ENCODE measurements at regions of chr1 and their contacts with region 1.

Region 1: DNA sequence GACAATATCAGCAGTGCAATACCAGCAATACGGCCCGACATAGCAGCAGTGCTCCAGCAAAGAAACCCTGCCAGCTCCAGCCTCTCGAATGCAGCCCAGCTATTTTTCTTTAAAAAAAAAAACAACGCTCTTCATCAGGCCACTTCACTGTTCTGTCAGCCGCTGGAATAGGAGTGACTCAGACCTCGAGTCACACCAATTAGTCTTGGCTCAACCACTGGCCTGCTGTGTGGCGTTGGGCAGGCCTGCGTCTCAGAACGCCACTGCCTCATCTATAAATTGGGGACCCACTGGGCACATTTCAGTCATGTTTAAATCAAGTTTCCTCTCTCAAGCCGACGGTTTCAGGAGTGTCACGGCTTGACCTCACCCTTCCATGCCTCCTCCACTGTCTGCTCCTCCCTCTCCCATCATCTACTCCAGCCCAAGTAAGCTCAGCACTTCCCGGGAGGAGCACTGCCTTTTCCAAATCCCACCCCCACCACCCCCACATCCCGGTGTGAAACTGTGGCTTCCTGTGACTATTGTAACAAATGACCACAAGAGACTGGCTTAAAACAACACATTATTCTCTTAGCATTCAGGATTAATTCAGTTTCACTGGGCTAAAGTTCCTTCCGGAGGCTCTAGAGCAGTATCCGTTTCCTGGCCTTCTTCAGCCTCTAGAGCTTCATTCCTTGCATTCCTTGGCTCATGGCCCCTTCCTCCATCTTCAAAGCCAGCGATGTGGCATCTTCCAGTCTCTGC is 71.9 kb upstream of the EFHD2 start:
- DNase-seq: peak; percentile 72

Region 2: DNA sequence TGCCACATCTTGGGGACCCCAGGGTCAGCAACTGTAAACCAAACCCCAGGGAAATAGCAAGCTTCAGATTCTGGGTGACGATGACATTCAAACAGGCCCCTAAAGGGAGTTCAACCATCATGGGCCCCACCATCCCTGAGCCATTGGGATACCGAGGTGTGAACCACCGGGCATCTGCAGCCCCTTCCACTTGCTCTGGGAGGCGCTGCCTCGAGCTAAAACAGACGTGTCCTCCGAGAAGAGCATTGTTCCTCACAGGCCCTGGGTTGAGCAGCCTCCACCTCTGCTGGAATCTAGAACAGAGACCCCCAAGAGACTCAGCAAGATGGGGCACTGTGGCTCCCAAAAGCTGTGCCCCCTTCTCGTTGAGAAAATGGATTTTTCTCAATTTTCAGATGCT is 52.8 kb after region 1 on chr1:
- in situ Hi-C with region 1: loop called (anchors 10 kb)
- DNase-seq: no peak